Breast epithelium (tissue), 4 donors: ENCODE measurements at regions of chrX and their contacts with region 1.

Region 1: DNA sequence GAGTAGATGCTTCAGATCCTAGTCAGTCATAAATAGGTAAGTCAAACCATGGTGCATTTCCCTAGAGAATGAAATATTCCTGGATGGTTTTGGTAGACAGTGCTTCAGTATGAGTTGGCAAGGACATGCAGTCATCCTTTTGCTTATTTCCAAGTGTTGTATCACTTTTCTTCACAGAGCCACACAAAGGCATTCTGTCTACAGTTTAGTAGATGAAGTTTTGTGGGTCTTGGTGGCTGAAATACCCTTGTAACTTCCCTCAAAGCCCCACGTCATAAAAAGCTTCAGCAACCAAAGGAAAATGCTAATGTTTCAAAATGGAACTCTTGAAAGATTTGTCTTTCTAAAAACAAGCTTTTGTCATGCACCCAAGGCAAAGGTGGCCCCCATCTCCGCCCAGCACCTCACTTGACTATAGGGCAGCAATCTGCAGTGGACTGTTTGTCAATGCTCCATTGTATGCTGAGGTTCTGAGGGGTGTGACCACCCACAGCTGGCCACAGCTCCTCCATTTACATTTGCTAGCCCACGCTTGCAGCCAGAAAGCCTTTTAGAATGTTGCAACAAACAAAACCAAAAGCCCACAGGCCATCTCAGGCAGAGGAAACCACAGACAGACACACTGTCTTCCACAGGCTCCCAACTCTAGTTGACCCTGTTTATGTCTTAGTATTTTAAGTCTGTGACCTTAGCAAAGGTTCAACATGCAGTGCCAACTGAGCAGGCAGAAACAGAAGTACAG is 87.1 kb upstream of the FAM9C start:
- DNase-seq: no peak
- H3K4me3 ChIP-seq: no peak overlapping the region
- H3K27ac ChIP-seq: no peak overlapping the region
- H3K4me1 ChIP-seq: no peaks in the 10 kb centered on the region
- H3K27me3 ChIP-seq: peaks cover 0 to 2% of the 10 kb centered on the region in 2 donors
- CTCF ChIP-seq: no peak
- POLR2A ChIP-seq: no peak

Region 2: DNA sequence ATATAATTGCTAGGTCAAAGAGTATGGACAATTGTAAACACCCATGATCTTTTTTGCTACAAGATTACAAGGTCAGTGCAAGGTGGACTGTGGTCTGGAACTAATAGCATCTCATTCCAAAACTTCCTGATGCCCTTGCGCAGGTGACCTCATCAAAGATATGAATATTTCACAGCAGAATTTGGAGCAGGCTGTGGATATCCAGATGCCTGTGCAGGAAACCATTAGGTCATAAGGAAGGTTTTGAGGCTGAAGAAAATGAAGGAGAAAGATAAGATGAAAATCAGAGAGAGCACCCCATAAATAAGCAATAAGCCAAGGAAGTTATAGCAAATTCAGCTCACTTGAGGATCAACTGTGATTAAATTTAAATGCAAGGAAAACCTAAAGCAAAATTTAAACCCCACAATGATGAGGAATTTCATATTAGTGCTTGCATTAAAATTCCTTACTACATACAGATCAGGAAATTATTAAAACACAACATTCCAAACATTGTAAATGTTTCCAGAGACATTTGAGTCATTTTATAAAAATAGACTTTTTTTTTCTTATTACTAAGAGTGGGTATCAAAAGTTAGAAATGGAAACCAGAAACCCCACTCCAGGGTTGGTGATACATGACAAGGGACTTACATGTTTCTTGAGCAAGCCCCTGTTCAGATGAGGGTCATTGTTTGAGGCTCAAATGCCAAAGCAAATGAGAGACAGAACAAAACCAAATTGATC is 13.5 kb after region 1 on chrX:
- intact Hi-C with region 1: loop called (anchors 2 kb)
- DNase-seq: no peak
- H3K4me3 ChIP-seq: no peak overlapping the region
- H3K27ac ChIP-seq: no peak overlapping the region
- H3K4me1 ChIP-seq: no peaks in the 10 kb centered on the region
- H3K27me3 ChIP-seq: peaks cover 0 to 2% of the 10 kb centered on the region in 2 donors
- CTCF ChIP-seq: no peak
- POLR2A ChIP-seq: no peak

Region 3: DNA sequence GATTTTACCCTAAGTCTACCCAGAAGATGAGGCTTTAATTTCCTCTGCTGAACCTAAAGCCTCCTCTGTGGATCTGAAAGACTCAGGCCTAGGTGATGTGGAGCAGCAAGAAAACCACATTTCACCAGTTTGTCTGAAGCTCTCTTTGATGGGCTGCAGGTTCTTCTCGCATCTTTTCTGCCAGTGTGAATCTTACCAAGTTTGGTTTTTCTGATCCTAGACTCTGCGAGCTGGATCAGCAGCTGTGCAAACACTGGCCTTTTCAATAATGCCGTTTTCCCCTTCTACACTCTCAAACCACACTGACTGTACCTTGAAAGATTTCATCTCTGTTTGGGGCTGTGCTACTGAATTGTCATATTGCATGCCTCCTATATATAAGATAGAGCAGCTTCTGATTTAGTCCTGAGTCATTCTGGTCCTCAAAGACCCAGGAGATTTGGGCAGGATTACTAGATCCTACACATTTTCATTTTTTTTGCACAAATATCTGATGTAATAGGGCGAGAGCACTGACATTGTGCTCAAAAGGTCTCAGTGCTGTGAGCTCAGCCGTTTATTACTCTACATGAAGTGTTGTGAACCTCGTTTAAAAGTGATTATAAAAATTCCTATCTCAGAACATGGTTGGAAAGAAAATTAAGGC is 46.5 kb after region 1 on chrX:
- intact Hi-C with region 1: no loop called
- DNase-seq: no peak
- H3K4me3 ChIP-seq: no peak overlapping the region
- H3K27ac ChIP-seq: no peak overlapping the region
- H3K4me1 ChIP-seq: no peaks in the 10 kb centered on the region
- H3K27me3 ChIP-seq: peaks cover 0 to 20% of the 10 kb centered on the region in 2 donors
- CTCF ChIP-seq: no peak
- POLR2A ChIP-seq: no peak